Heart left ventricle (tissue), 16 donors: ENCODE measurements at regions of chr18 and their contacts with region 1.

Region 1: DNA sequence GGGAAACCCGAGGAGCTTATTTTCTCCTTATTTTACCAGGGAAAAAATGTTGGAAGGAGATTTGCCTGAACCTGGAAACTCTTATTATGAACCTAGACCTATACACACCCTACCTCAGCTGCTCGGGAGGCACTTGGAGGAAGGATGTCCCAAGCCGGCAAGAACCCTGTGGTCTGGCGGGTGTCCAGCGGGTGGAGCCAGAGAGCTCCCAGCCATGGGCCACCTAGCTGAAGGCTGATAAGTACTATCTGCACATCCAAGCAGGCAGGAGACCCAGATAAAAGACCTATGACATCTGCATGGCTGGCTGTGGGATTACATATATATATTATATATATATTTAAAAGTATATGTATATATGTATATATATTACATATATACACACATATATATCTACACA is 1.1 kb upstream of the SLC14A1 start:
- DNase-seq: peak; percentile 69 to 89 (median 77)
- ATAC-seq: peak in 3 of 4 donors; percentile 78 to 83 (median 80)
- H3K4me3 ChIP-seq: no peak overlapping the region
- H3K27ac ChIP-seq: no peak overlapping the region
- H3K4me1 ChIP-seq: peaks cover 0 to 4% (median 0%) of the 10 kb centered on the region in 12 donors
- H3K27me3 ChIP-seq: peaks cover 0 to 6% (median 0%) of the 10 kb centered on the region in 9 donors
- CTCF ChIP-seq: peak; percentile 51 to 82 (median 73)
- POLR2A ChIP-seq: no peak

Region 2: GRCh38 chr18:45775241-45775676 is 52.4 kb after region 1 on chr18:
- intact Hi-C with region 1: loop called in 2 of 10 experiments (anchors 5 kb)
- DNase-seq: peak; percentile 77 to 88 (median 81)
- ATAC-seq: peak; percentile 71 to 95 (median 94)
- H3K4me3 ChIP-seq: peak overlapping the region; percentile 40 to 90 (median 70)
- H3K27ac ChIP-seq: peak overlapping the region; percentile 54 to 89 (median 74)
- H3K4me1 ChIP-seq: peaks cover 0 to 18% (median 7%) of the 10 kb centered on the region in 12 donors
- H3K27me3 ChIP-seq: peaks cover 0 to 6% (median 0%) of the 10 kb centered on the region in 9 donors
- CTCF ChIP-seq: no peak
- POLR2A ChIP-seq: peak in 1 of 2 donors; percentile 43

Region 3: DNA sequence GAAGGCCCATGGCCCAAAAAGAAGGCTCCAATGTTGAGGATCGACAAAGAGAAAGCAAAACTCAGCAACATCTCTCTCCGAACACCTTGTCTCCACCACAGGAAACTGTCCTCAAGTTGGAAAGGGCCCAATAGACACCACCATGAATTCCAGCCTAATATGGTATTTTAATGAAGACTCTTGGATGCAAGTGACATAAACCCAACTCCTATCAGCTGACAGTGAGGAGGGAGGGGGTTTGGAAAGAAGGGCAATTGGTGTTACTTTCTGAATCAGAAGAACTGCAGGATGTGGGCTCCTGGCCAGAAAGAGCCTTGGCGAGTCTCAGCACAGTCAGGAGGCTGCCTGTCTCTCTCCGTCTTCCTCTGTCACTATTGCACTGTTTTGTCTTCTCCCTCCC is 62.2 kb after region 1 on chr18:
- intact Hi-C with region 1: loop called in 1 of 10 experiments (anchors 5 kb)
- DNase-seq: peak in 2 of 5 donors; percentile 30 to 32
- ATAC-seq: peak in 2 of 4 donors; percentile 44 to 51
- H3K4me3 ChIP-seq: no peak overlapping the region
- H3K27ac ChIP-seq: no peak overlapping the region
- H3K4me1 ChIP-seq: peaks cover 0 to 12% (median 4%) of the 10 kb centered on the region in 12 donors
- H3K27me3 ChIP-seq: no peaks in the 10 kb centered on the region
- CTCF ChIP-seq: no peak
- POLR2A ChIP-seq: no peak

Region 4: GRCh38 chr18:45839414-45840395 is 116.8 kb after region 1 on chr18:
- intact Hi-C with region 1: loop called (anchors 1 to 5 kb)
- DNase-seq: no peak
- ATAC-seq: peak; percentile 13 to 83 (median 78)
- H3K4me3 ChIP-seq: no peak overlapping the region
- H3K27ac ChIP-seq: no peak overlapping the region
- H3K4me1 ChIP-seq: peaks cover 0 to 27% (median 14%) of the 10 kb centered on the region in 12 donors
- H3K27me3 ChIP-seq: peaks cover 7 to 39% (median 30%) of the 10 kb centered on the region in 9 donors
- CTCF ChIP-seq: peak; percentile 41 to 68 (median 54)
- POLR2A ChIP-seq: no peak

Region 5: GRCh38 chr18:45845410-45845809 is 122.5 kb after region 1 on chr18:
- intact Hi-C with region 1: loop called in 2 of 10 experiments (anchors 1 to 2 kb)
- DNase-seq: no peak
- ATAC-seq: no peak
- H3K4me3 ChIP-seq: no peak overlapping the region
- H3K27ac ChIP-seq: no peak overlapping the region
- H3K4me1 ChIP-seq: peaks cover 0 to 3% (median 0%) of the 10 kb centered on the region in 12 donors
- H3K27me3 ChIP-seq: no peaks in the 10 kb centered on the region
- CTCF ChIP-seq: no peak
- POLR2A ChIP-seq: no peak

Region 6: DNA sequence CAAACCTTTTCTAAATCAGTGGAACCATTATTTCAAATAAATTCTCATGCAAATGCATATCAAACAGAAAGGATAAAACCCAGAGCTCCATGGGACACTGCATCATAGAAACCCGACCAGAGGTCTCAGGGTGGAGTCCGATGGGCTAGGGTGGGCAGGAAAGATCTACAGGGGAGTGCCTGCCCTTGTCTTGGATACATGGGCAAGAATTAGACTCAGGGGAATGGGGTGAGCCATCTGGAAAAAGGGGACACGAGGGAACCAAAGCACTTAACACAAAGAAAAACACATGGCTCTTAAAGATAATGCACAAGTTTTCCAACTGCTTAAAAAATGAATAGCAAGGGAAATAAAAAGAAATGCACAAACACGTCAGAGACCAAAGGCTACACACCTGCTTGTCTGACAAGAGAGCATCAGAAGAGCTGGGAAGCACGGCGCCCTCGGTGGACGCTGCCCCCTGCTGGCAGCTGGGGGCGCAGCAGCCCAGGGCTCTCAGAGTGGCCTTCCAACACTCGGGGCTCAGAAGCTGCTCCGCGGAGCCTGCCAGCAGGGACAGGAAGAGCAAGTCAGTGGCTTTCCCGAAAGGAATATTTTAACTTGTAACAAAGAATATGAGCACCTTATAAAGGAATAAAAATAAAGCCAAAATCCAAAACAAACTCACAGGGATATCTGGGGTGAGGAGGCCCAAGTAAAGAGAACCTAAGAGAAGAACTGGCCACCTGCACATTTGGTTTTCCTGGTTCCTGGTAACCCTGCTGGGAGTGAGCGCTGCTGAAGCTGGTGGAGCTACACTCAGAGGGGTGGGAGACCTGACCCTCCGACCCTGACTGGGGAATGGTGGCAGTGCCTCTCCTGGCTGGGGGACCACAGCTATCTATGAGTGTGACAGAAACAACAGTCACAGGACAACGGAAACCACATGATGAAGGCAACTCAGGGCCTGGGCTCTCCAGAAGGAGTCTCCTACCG is 157.1 kb after region 1 on chr18:
- intact Hi-C with region 1: loop called in 2 of 10 experiments (anchors 1 kb)
- DNase-seq: peak; percentile 64 to 87 (median 68)
- ATAC-seq: peak; percentile 81 to 95 (median 92)
- H3K4me3 ChIP-seq: no peak overlapping the region
- H3K27ac ChIP-seq: no peak overlapping the region
- H3K4me1 ChIP-seq: peaks cover 0 to 6% (median 2%) of the 10 kb centered on the region in 12 donors
- H3K27me3 ChIP-seq: no peaks in the 10 kb centered on the region
- CTCF ChIP-seq: peak; percentile 98 to 100 (median 99)
- POLR2A ChIP-seq: no peak